B cell (primary cell): ENCODE measurements at regions of chr1 and their contacts with region 1.

Region 1: DNA sequence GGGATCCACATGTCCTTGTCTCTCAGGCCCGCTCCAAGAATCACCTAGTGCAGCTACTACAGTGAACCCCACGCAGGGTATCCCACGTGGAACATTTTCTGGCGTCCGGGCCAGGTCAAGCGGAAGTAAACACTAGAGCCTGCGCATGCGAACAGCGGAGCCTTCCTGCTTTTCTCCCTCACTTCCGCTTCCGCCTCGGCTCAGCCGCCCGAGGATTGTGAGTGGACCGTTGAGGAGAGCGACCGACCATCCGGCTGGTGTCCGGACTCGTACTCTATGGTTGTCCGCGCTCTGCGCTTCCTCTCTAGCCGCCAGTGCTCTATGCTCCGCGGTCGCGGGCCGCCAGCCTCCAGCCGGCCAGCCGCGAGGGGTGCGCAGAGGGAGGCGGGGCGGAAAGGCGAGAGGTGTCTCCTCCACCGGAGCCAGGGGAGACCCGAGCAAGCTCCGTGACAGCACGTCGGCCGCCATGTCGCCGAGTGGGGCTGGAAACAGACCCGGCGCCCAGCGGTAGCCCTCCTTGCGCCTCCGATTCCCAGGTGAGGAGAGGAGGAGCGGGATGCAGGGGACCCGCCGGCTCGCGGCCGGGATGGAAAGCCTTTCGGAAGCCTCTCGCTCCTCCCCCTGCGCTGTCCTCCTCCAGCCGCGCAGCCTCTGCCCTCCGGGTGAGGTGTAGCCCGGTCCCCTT is at the starts of genes CNST and TFB2M:
- DNase-seq: peak; percentile 98
- ATAC-seq: peak; percentile 90
- H3K4me3 ChIP-seq: peak within 1 kb of the TSS; percentile 70 to 100 (median 95)
- H3K4me3 Mint-ChIP-seq: peak within 1 kb of the TSS; percentile 98
- H3K27ac ChIP-seq: peak within 1 kb of the TSS; percentile 83 to 95
- H3K27ac Mint-ChIP-seq: peak within 1 kb of the TSS; percentile 94
- H3K4me1 ChIP-seq: peaks cover 50 to 53% of the 10 kb centered on the region in 2 donors
- H3K4me1 Mint-ChIP-seq: peaks cover 45% of the 10 kb centered on the region
- H3K27me3 ChIP-seq: no peaks in the 10 kb centered on the region
- H3K27me3 Mint-ChIP-seq: no peaks in the 10 kb centered on the region
- CTCF ChIP-seq: no peak
- total RNA-seq, gene CNST: 54.0 and 54.6 TPM in 2 replicates
- total RNA-seq, gene TFB2M: 11.6 and 14.7 TPM in 2 replicates

Region 2: DNA sequence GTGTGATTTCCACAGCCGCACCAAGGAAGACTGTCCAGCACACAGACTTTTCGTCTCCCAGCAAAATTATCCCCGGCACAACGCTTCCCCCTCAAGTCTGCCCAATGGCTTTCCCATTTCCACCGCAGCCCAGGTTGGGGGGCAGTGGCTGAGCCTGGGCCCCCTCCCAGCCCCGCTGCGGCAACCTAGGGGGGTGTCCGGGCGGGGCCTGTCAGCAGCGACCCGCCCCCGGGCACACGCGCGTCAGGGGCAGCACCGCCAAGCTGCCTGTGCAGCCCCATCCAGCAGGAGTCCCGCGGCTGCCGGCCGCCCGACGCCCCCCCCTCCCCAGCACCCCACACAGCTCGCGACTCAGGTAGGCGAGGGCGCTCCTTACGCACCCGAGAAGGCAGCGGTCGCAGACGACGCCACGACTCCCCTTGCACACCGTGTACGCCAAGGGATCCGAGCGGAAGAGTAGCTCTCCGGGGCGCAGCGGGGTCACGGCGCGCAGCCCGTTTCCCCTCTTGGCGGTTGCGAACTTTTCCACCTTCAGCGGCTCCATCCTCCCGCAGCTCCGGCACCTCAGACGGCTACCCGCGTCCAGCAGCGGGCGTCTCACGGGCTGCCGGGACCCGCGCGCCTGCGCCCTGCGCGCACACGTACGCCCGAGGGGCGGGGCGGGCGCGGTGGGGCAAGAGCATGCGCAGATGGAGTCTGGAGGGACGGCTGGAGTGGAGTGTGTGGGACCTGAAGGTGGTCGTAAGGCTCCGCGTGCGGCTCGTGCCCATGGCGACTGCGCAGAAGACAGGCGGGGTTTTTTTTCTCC is 59.4 kb before region 1 on chr1 and contains the start of gene SMYD3:
- CTCF ChIA-PET with region 1: no interaction called
- POLR2A ChIA-PET with region 1: no interaction called
- intact Hi-C with region 1: loop called (anchors 1 kb)
- DNase-seq: peak; percentile 90
- ATAC-seq: peak; percentile 92
- H3K4me3 ChIP-seq: peak within 1 kb of the TSS; percentile 79 to 92 (median 82)
- H3K4me3 Mint-ChIP-seq: peak within 1 kb of the TSS; percentile 97
- H3K27ac ChIP-seq: peak within 1 kb of the TSS; percentile 15 to 58
- H3K27ac Mint-ChIP-seq: peak within 1 kb of the TSS; percentile 96
- H3K4me1 ChIP-seq: peaks cover 10 to 14% of the 10 kb centered on the region in 2 donors
- H3K4me1 Mint-ChIP-seq: peaks cover 20% of the 10 kb centered on the region
- H3K27me3 ChIP-seq: no peaks in the 10 kb centered on the region
- H3K27me3 Mint-ChIP-seq: no peaks in the 10 kb centered on the region
- CTCF ChIP-seq: no peak
- total RNA-seq, gene SMYD3: 37.2 and 37.3 TPM in 2 replicates

Region 3: DNA sequence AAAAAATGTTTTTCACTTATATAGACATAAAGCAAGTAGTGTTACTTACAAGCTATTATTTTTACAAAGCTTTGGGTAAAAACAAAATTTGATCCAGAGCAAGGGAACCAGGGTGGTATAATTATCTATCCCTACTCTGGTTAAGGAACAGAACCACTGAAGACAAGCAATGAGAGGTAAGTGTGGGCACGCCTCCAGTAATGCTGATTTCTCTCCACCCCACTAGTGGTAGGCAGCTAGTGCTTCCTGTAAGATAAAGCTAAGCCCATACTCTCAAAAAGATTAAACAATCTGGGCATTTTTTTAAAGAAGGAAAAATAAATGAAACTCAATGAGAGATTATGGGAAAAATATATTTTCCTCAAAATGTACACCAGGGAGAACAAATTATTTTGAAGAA is 22.3 kb before region 1 on chr1:
- CTCF ChIA-PET with region 1: no interaction called
- POLR2A ChIA-PET with region 1: no interaction called
- intact Hi-C with region 1: no loop called
- DNase-seq: no peak
- ATAC-seq: no peak
- H3K4me3 ChIP-seq: no peak overlapping the region
- H3K4me3 Mint-ChIP-seq: no peak overlapping the region
- H3K27ac ChIP-seq: no peak overlapping the region
- H3K27ac Mint-ChIP-seq: no peak overlapping the region
- H3K4me1 ChIP-seq: no peaks in the 10 kb centered on the region
- H3K4me1 Mint-ChIP-seq: no peaks in the 10 kb centered on the region
- H3K27me3 ChIP-seq: no peaks in the 10 kb centered on the region
- H3K27me3 Mint-ChIP-seq: no peaks in the 10 kb centered on the region
- CTCF ChIP-seq: no peak